ENCODE measurements at regions of chr2 and their contacts with region 1.

Region 1: DNA sequence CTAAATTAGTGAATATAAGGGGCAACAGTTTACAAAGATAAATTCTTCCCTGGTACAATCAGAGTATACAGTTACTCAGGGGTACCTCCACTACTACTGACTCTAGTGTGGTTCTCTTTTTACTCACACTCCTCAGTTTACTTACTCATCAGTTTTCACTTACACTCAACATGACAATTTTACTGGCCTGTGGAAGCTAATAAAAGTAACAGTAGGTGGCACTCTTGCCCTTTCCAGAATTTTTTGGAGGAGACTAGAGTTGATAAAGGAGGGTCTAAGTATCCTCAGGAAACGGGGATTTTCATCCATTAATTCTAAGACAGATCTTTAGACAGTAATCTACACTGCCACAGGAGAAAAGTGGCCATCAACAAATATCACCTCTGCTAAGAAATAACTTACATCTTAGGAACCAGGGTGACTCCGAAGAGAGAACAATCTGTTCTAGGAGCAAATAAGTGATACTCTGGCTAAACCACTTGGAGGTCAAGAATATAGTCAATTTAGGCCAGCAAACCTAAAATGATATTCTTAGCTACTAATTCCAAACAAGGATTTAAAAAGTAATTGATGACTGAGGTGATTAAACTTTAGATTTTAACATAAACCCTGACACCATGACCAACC is 61.3 kb downstream of the ATL2 start:
- DNase-seq: peak; percentile 30
- ATAC-seq: peak; percentile 88
- H3K4me3 ChIP-seq: no peak overlapping the region
- H3K27ac ChIP-seq: no peak overlapping the region
- H3K4me1 ChIP-seq: no peaks in the 10 kb centered on the region
- H3K27me3 ChIP-seq: no peaks in the 10 kb centered on the region
- CTCF ChIP-seq: peak; percentile 74; the same call in 1 of the 2 replicates

Region 2: GRCh38 chr2:38045811-38046210 is 270.0 kb before region 1 on chr2:
- CTCF ChIA-PET with region 1: no interaction called
- POLR2A ChIA-PET with region 1: no interaction called
- in situ Hi-C with region 1: no loop called
- intact Hi-C with region 1: no loop called
- DNase-seq: no peak
- ATAC-seq: no peak
- H3K4me3 ChIP-seq: no peak overlapping the region
- H3K27ac ChIP-seq: no peak overlapping the region
- H3K4me1 ChIP-seq: no peaks in the 10 kb centered on the region
- H3K27me3 ChIP-seq: peaks cover 2% of the 10 kb centered on the region; the same call in 1 of the 2 replicates
- CTCF ChIP-seq: no peak

Region 3: GRCh38 chr2:38214209-38214717 is 101.6 kb before region 1 on chr2:
- CTCF ChIA-PET with region 1: no interaction called
- POLR2A ChIA-PET with region 1: no interaction called
- in situ Hi-C with region 1: no loop called
- intact Hi-C with region 1: no loop called
- DNase-seq: no peak
- ATAC-seq: no peak
- H3K4me3 ChIP-seq: no peak overlapping the region
- H3K27ac ChIP-seq: no peak overlapping the region
- H3K4me1 ChIP-seq: no peaks in the 10 kb centered on the region
- H3K27me3 ChIP-seq: no peaks in the 10 kb centered on the region
- CTCF ChIP-seq: no peak

Region 4: GRCh38 chr2:38362232-38362631 is 46.4 kb after region 1 on chr2:
- CTCF ChIA-PET with region 1: no interaction called
- POLR2A ChIA-PET with region 1: no interaction called
- in situ Hi-C with region 1: no loop called
- intact Hi-C with region 1: no loop called
- DNase-seq: no peak
- ATAC-seq: no peak
- H3K4me3 ChIP-seq: no peak overlapping the region
- H3K27ac ChIP-seq: no peak overlapping the region
- H3K4me1 ChIP-seq: peaks cover 9% of the 10 kb centered on the region; the same call in 1 of the 2 replicates
- H3K27me3 ChIP-seq: no peaks in the 10 kb centered on the region
- CTCF ChIP-seq: no peak

Region 5: DNA sequence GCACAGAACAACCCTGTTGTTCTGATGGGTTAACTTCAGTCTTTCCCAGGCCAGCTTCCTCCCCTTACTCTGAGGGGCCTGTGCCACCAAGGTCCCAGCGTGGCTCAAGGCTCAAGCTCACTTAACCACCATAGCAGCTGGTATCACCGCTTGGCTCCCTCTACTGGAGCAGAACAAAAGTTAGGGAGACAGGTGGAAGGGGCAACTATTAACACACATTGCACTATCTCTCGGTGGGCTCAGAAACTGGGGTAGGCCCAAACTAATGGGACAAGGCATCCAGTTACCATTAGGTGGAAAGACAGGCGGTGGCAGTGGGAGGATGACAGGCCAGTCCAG is 149.9 kb after region 1 on chr2:
- CTCF ChIA-PET with region 1: interaction called, 14 read pairs
- POLR2A ChIA-PET with region 1: interaction called, 6 read pairs
- in situ Hi-C with region 1: no loop called
- intact Hi-C with region 1: loop called (anchors 5 kb)
- DNase-seq: peak; percentile 18
- ATAC-seq: peak; percentile 81
- H3K4me3 ChIP-seq: no peak overlapping the region
- H3K27ac ChIP-seq: no peak overlapping the region
- H3K4me1 ChIP-seq: no peaks in the 10 kb centered on the region
- H3K27me3 ChIP-seq: no peaks in the 10 kb centered on the region
- CTCF ChIP-seq: peak; percentile 88

Region 6: DNA sequence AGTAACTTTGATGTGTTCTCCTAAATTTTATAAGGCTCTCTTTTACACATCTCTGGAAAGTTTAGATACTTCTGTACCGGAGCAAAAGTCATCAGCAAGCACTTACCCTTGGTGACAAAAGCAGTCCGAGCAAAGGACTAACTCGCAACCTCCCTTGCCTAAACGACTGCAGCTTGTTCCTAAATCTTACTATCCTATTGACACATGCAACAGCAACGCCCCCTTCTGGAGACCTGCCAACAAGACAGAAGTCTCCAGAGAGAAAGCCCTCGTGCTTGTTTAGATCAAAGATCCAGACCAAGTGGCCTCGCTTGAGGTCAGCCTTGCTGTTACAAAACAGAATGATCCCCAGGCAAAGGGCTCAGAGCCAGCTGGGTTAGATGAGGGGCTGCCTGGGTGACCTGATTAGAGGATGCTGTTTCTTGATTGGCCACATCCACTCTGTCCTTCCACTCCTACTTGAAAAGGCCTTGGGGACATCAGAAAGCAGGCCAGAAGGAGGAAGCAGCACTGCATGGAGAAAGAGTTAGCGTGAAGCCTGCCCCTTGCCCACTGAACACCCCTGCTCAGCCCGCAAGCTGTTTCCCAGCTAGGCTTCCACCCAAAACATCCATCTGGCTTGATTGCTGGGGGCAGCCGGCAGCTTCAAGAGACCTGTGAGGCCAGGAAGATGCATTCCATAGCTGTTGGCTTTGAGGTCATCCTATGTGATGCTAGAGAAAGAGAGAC is 192.7 kb after region 1 on chr2:
- CTCF ChIA-PET with region 1: no interaction called
- POLR2A ChIA-PET with region 1: no interaction called
- in situ Hi-C with region 1: no loop called
- intact Hi-C with region 1: loop called (anchors 5 kb)
- DNase-seq: peak; percentile 38
- ATAC-seq: peak; percentile 82
- H3K4me3 ChIP-seq: no peak overlapping the region
- H3K27ac ChIP-seq: no peak overlapping the region
- H3K4me1 ChIP-seq: no peaks in the 10 kb centered on the region
- H3K27me3 ChIP-seq: no peaks in the 10 kb centered on the region
- CTCF ChIP-seq: peak; percentile 81